ENCODE measurements at regions of chr12 and their contacts with region 1.

Region 1: GRCh38 chr12:47742253-47742825 is 16.3 kb downstream of the RAPGEF3 start:
- DNase-seq: peak; percentile 82
- H3K4me3 Mint-ChIP-seq: no peak overlapping the region
- H3K27ac Mint-ChIP-seq: no peak overlapping the region
- H3K4me1 Mint-ChIP-seq: peaks cover 20% of the 10 kb centered on the region
- H3K27me3 Mint-ChIP-seq: peaks cover 17% of the 10 kb centered on the region

Region 2: GRCh38 chr12:47705566-47706425 is 36.5 kb before region 1 on chr12 and contains the start of gene RPAP3:
- CTCF ChIA-PET with region 1: interaction called, 87 read pairs
- POLR2A ChIA-PET with region 1: interaction called, 7 read pairs
- DNase-seq: peak; percentile 98
- H3K4me3 Mint-ChIP-seq: peak within 1 kb of the TSS; percentile 95
- H3K27ac Mint-ChIP-seq: peak within 1 kb of the TSS; percentile 99
- H3K4me1 Mint-ChIP-seq: peaks cover 58% of the 10 kb centered on the region
- H3K27me3 Mint-ChIP-seq: no peaks in the 10 kb centered on the region
- total RNA-seq, gene RPAP3: 38.4 to 40.7 TPM

Region 3: GRCh38 chr12:47725893-47726292 is 16.4 kb before region 1 on chr12:
- CTCF ChIA-PET with region 1: interaction called, 55 read pairs
- POLR2A ChIA-PET with region 1: interaction called, 3 read pairs
- DNase-seq: no peak
- H3K4me3 Mint-ChIP-seq: no peak overlapping the region
- H3K27ac Mint-ChIP-seq: no peak overlapping the region
- H3K4me1 Mint-ChIP-seq: peaks cover 25% of the 10 kb centered on the region
- H3K27me3 Mint-ChIP-seq: no peaks in the 10 kb centered on the region

Region 4: DNA sequence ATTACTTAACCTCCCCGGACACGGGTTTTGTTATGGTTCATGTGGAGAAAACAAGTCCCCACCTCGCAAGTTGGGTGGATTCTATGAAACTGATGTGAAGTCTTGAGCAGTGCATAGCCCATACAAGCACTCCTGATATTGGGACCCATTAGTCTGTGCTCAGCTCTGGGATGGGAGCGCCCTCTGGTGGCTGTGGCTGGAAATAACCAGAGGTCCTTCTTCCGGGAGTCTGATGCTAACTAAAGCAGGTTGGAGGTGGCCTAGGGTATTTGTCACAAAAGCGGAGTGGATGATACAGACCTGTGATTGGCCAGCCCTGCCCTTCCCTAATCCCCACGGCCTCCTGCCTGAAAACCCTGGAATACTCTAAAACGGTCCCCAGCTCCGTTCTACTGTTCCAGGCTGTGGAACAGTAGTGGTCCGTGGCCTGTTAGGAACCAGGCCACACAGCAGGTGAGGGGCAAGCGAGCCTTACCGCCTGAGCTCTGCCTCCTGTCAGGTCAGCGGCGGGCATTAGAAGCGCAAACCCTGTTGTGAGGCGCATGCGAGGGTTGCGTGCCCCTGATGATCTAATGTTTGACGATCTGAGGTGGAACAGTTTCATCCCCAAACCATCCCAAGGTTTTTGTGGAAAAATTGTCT is 37.1 kb after region 1 on chr12:
- CTCF ChIA-PET with region 1: interaction called, 431 read pairs
- POLR2A ChIA-PET with region 1: interaction called, 12 read pairs
- DNase-seq: peak; percentile 92
- H3K4me3 Mint-ChIP-seq: peak overlapping the region; percentile 24
- H3K27ac Mint-ChIP-seq: peak overlapping the region; percentile 65
- H3K4me1 Mint-ChIP-seq: peaks cover 49% of the 10 kb centered on the region
- H3K27me3 Mint-ChIP-seq: no peaks in the 10 kb centered on the region

Region 5: GRCh38 chr12:47819896-47820630 is 77.7 kb after region 1 on chr12 and contains the start of gene HDAC7:
- CTCF ChIA-PET with region 1: interaction called, 18 read pairs
- POLR2A ChIA-PET with region 1: no interaction called
- DNase-seq: peak; percentile 81
- H3K4me3 Mint-ChIP-seq: peak within 1 kb of the TSS; percentile 89
- H3K27ac Mint-ChIP-seq: peak within 1 kb of the TSS; percentile 93
- H3K4me1 Mint-ChIP-seq: peaks cover 66% of the 10 kb centered on the region
- H3K27me3 Mint-ChIP-seq: no peaks in the 10 kb centered on the region
- total RNA-seq, gene HDAC7: 315 to 328 TPM

Region 6: GRCh38 chr12:47837190-47838171 is 95.1 kb after region 1 on chr12:
- CTCF ChIA-PET with region 1: interaction called, 240 read pairs
- POLR2A ChIA-PET with region 1: interaction called, 48 read pairs
- DNase-seq: peak; percentile 70
- H3K4me3 Mint-ChIP-seq: no peak overlapping the region
- H3K27ac Mint-ChIP-seq: no peak overlapping the region
- H3K4me1 Mint-ChIP-seq: peaks cover 61% of the 10 kb centered on the region
- H3K27me3 Mint-ChIP-seq: no peaks in the 10 kb centered on the region